ENCODE measurements at regions of chr6 and their contacts with region 1.

Region 1: DNA sequence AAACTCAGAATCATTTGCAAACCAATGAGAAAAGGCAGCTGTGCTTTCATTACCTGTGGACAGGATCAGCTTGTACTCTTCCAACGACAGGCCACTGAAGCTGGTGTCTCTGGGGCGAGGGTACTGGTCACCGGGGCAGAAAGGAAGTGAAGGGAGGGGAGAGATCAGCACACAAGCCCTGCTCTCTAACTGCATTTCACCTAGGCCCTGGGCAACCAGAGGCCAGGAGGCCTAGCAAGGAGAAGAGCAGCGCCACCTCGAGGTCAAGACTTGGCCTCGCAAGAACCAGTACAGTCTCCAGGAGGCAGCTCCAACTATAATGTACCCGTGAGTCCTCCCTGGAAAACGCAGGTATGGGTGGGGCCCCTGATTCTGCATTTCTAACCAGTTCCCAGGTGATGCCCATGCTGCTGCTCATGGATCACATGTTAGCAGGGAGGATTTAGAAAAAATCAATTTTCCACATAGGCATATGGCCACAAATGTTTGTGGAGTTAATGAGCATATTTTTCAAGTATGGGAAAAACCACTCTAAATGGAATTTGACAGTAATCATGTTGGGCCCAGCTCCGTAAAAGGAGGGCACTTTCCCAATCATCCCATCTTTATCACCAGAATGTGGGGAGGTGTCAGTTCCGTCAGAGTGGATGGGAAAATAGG is 11.0 kb downstream of the UQCC2 start:
- DNase-seq: peak; percentile 74
- H3K4me3 ChIP-seq: no peak overlapping the region
- H3K27ac ChIP-seq: no peak overlapping the region
- H3K4me1 ChIP-seq: peaks cover 26% of the 10 kb centered on the region
- H3K27me3 ChIP-seq: no peaks in the 10 kb centered on the region
- CTCF ChIP-seq: peak; percentile 74 to 90

Region 2: GRCh38 chr6:33417903-33418689 is 282.4 kb before region 1 on chr6 and contains the start of gene CUTA:
- CTCF ChIA-PET with region 1: no interaction called
- dilution Hi-C with region 1: no loop called
- in situ Hi-C with region 1: no loop called
- intact Hi-C with region 1: loop called (anchors 10 kb)
- DNase-seq: peak; percentile 100
- H3K4me3 ChIP-seq: peak within 1 kb of the TSS; percentile 56 to 75 (median 73)
- H3K27ac ChIP-seq: peak within 1 kb of the TSS; percentile 87
- H3K4me1 ChIP-seq: peaks cover 23% of the 10 kb centered on the region
- H3K27me3 ChIP-seq: no peaks in the 10 kb centered on the region
- CTCF ChIP-seq: peak in 1 of 2 donors; percentile 34
- total RNA-seq, gene CUTA: 81.4 to 181 TPM

Region 3: GRCh38 chr6:33454009-33454946 is 246.2 kb before region 1 on chr6 and contains the start of gene ZBTB9:
- CTCF ChIA-PET with region 1: no interaction called
- dilution Hi-C with region 1: no loop called
- in situ Hi-C with region 1: no loop called
- intact Hi-C with region 1: loop called (anchors 10 kb)
- DNase-seq: peak; percentile 96
- H3K4me3 ChIP-seq: peak within 1 kb of the TSS; percentile 73 to 97 (median 92)
- H3K27ac ChIP-seq: peak within 1 kb of the TSS; percentile 61
- H3K4me1 ChIP-seq: peaks cover 5% of the 10 kb centered on the region
- H3K27me3 ChIP-seq: no peaks in the 10 kb centered on the region
- CTCF ChIP-seq: no peak
- total RNA-seq, gene ZBTB9: 5.7 to 10.3 TPM

Region 4: DNA sequence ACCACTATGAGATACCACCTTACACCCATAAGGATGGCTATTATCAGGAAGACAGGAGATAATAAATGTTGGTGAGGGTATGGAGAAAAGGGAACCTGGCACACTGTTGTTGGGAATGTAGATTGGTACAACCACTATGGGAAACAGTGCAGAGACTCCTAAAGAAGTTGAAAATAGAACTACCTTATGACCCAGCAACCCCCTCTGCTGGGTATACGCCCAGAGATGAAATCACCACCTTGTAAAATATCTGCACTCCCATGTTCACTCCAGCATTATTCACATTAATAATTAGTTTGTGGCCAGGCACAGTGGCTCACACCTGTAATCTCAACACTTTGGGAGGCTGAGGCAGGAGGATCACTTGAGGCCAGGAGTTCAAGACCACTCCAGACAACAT is 219.3 kb before region 1 on chr6:
- CTCF ChIA-PET with region 1: no interaction called
- dilution Hi-C with region 1: no loop called
- in situ Hi-C with region 1: no loop called
- intact Hi-C with region 1: no loop called
- DNase-seq: no peak
- H3K4me3 ChIP-seq: no peak overlapping the region
- H3K27ac ChIP-seq: no peak overlapping the region
- H3K4me1 ChIP-seq: no peaks in the 10 kb centered on the region
- H3K27me3 ChIP-seq: no peaks in the 10 kb centered on the region
- CTCF ChIP-seq: no peak

Region 5: GRCh38 chr6:33642897-33643296 is 57.6 kb before region 1 on chr6:
- CTCF ChIA-PET with region 1: no interaction called
- dilution Hi-C with region 1: no loop called
- in situ Hi-C with region 1: no loop called
- intact Hi-C with region 1: loop called (anchors 2 kb)
- DNase-seq: no peak
- H3K4me3 ChIP-seq: no peak overlapping the region
- H3K27ac ChIP-seq: no peak overlapping the region
- H3K4me1 ChIP-seq: peaks cover 16% of the 10 kb centered on the region
- H3K27me3 ChIP-seq: no peaks in the 10 kb centered on the region
- CTCF ChIP-seq: no peak

Region 6: GRCh38 chr6:33661106-33661838 is 39.2 kb before region 1 on chr6:
- CTCF ChIA-PET with region 1: no interaction called
- dilution Hi-C with region 1: loop called (anchors 5 kb)
- in situ Hi-C with region 1: no loop called
- intact Hi-C with region 1: no loop called
- DNase-seq: no peak
- H3K4me3 ChIP-seq: no peak overlapping the region
- H3K27ac ChIP-seq: no peak overlapping the region
- H3K4me1 ChIP-seq: no peaks in the 10 kb centered on the region
- H3K27me3 ChIP-seq: no peaks in the 10 kb centered on the region
- CTCF ChIP-seq: no peak